HepG2 (cell line): ENCODE measurements at regions of chr12 and their contacts with region 1.

Region 1: GRCh38 chr12:98373025-98373554 is 142.3 kb upstream of the TMPO start:
- DNase-seq: peak; percentile 30
- ATAC-seq: peak; percentile 63
- H3K4me3 ChIP-seq: no peak overlapping the region
- H3K27ac ChIP-seq: no peak overlapping the region
- H3K4me1 ChIP-seq: no peaks in the 10 kb centered on the region
- H3K27me3 ChIP-seq: no peaks in the 10 kb centered on the region; a peak in 1 of 5 replicates
- CTCF ChIP-seq: peak; percentile 67
- EP300 ChIP-seq: no peak
- POLR2A ChIP-seq: no peak
- RAD21 ChIP-seq: no peak

Region 2: DNA sequence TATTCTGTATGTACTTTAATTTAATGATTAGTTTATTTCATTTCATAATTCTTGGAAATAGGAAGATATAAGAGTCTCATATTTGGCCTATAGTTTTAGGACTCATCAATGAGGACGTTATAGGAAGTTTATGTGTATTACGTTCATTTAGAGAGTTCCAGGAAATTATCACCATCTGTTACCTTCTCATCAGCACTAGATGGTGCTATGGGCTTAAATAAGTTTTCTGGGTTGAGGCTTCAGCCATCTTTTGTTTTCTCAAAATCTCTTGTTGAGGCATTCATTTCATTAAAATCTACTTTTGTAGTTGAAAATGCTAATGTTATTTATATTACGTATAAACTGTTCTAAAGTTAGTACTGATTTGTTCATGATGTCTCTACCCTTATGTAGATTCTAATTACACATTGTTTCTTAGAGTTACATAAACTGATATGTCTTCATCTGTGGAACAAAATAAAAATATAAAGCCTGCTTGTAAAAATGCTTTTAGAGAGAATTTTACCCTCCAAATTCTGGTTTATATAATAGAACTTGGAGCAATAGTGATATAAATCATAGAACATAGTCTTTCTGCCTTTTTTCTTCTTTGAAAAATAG is 1794.5 kb before region 1 on chr12:
- CTCF ChIA-PET with region 1: no interaction called
- POLR2A ChIA-PET with region 1: no interaction called
- in situ Hi-C with region 1: no loop called
- intact Hi-C with region 1: loop called (anchors 5 kb)
- DNase-seq: peak; percentile 48
- ATAC-seq: peak; percentile 71
- H3K4me3 ChIP-seq: no peak overlapping the region
- H3K27ac ChIP-seq: no peak overlapping the region
- H3K4me1 ChIP-seq: no peaks in the 10 kb centered on the region
- H3K27me3 ChIP-seq: no peaks in the 10 kb centered on the region
- CTCF ChIP-seq: peak; percentile 70
- EP300 ChIP-seq: no peak
- POLR2A ChIP-seq: no peak
- RAD21 ChIP-seq: no peak

Region 3: GRCh38 chr12:96985480-96986362 is 1387.4 kb before region 1 on chr12:
- CTCF ChIA-PET with region 1: no interaction called
- POLR2A ChIA-PET with region 1: no interaction called
- in situ Hi-C with region 1: loop called (anchors 25 kb)
- intact Hi-C with region 1: loop called (anchors 2 kb)
- DNase-seq: no peak
- ATAC-seq: peak; percentile 90
- H3K4me3 ChIP-seq: peak overlapping the region in 1 of 3 experiments; percentile 8; a peak in 1 of 6 replicates
- H3K27ac ChIP-seq: no peak overlapping the region
- H3K4me1 ChIP-seq: no peaks in the 10 kb centered on the region
- H3K27me3 ChIP-seq: peaks cover 1 to 10% of the 10 kb centered on the region in 2 experiments; a peak in 2 of 5 replicates
- CTCF ChIP-seq: peak; percentile 63
- EP300 ChIP-seq: no peak
- POLR2A ChIP-seq: no peak
- RAD21 ChIP-seq: 0 out of 2 replicates have a peak, but pooled peaks have one; percentile 18

Region 4: GRCh38 chr12:97716356-97716755 is 656.7 kb before region 1 on chr12:
- CTCF ChIA-PET with region 1: no interaction called
- POLR2A ChIA-PET with region 1: no interaction called
- in situ Hi-C with region 1: no loop called
- intact Hi-C with region 1: loop called (anchors 5 kb)
- DNase-seq: peak; percentile 9
- ATAC-seq: peak; percentile 67
- H3K4me3 ChIP-seq: no peak overlapping the region
- H3K27ac ChIP-seq: no peak overlapping the region
- H3K4me1 ChIP-seq: no peaks in the 10 kb centered on the region
- H3K27me3 ChIP-seq: no peaks in the 10 kb centered on the region
- CTCF ChIP-seq: peak; percentile 30; the same call in 1 of the 2 replicates
- EP300 ChIP-seq: no peak
- POLR2A ChIP-seq: no peak
- RAD21 ChIP-seq: no peak

Region 5: GRCh38 chr12:98002712-98003493 is 370.2 kb before region 1 on chr12:
- CTCF ChIA-PET with region 1: no interaction called
- POLR2A ChIA-PET with region 1: no interaction called
- in situ Hi-C with region 1: no loop called
- intact Hi-C with region 1: loop called (anchors 10 kb)
- DNase-seq: peak; percentile 36
- ATAC-seq: peak; percentile 64
- H3K4me3 ChIP-seq: no peak overlapping the region
- H3K27ac ChIP-seq: no peak overlapping the region
- H3K4me1 ChIP-seq: no peaks in the 10 kb centered on the region
- H3K27me3 ChIP-seq: no peaks in the 10 kb centered on the region
- CTCF ChIP-seq: peak; percentile 74
- EP300 ChIP-seq: no peak
- POLR2A ChIP-seq: no peak
- RAD21 ChIP-seq: no peak; the same call in 1 of the 2 replicates

Region 6: GRCh38 chr12:98227162-98227561 is 145.9 kb before region 1 on chr12:
- CTCF ChIA-PET with region 1: no interaction called
- POLR2A ChIA-PET with region 1: no interaction called
- in situ Hi-C with region 1: no loop called
- intact Hi-C with region 1: loop called (anchors 1 kb)
- DNase-seq: peak; percentile 6
- ATAC-seq: peak; percentile 60; the same call in 2 of the 3 replicates
- H3K4me3 ChIP-seq: no peak overlapping the region
- H3K27ac ChIP-seq: no peak overlapping the region
- H3K4me1 ChIP-seq: peaks cover 12% of the 10 kb centered on the region; the same call in 1 of the 2 replicates
- H3K27me3 ChIP-seq: no peaks in the 10 kb centered on the region
- CTCF ChIP-seq: peak; percentile 29
- EP300 ChIP-seq: no peak
- POLR2A ChIP-seq: no peak
- RAD21 ChIP-seq: no peak

Region 7: DNA sequence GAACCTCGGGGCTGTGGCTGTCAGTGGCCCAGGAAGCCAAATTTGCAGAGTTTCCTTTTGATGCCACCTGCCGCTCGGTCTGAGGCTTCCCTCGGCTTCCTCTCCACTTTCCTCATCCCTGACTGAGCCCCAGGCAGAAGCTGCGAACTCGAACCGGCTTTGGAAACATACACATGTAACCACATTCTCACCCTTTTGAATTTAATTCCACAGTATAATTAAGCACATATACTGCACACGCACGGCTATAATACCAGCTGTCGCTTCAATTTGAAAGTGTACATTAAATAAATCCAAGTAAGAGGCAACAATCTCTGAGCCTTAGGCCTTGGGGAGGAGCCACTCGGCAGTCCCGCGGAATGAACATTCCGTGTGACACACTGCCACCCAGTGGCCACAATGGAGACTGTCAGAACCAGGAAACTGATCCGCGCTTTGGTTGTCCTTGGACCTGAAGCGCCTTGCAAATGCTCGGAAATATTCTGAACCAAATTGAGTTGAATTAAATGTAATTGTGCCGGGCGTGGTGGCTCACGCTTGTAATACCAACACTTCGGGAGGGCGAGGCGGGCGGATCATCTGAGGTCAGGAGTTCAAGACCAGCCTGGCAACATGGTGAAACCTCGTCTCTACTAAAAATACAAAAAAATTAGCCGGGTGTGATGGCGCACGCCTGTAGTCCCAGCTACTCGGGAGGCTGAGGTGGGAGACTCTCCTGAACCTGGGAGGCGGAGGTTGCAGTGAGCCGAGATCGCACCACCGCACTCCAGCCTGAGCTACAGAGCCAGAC is 24.4 kb after region 1 on chr12:
- CTCF ChIA-PET with region 1: no interaction called
- POLR2A ChIA-PET with region 1: no interaction called
- in situ Hi-C with region 1: no loop called
- intact Hi-C with region 1: loop called (anchors 2 kb)
- DNase-seq: peak; percentile 68
- ATAC-seq: peak; percentile 94
- H3K4me3 ChIP-seq: peak overlapping the region; percentile 50 to 60 (median 54)
- H3K27ac ChIP-seq: no peak overlapping the region
- H3K4me1 ChIP-seq: peaks cover 31% of the 10 kb centered on the region
- H3K27me3 ChIP-seq: no peaks in the 10 kb centered on the region
- CTCF ChIP-seq: peak; percentile 93
- EP300 ChIP-seq: no peak
- POLR2A ChIP-seq: no peak
- RAD21 ChIP-seq: peak; percentile 78

Region 8: GRCh38 chr12:98470469-98471082 is 97.5 kb after region 1 on chr12:
- CTCF ChIA-PET with region 1: no interaction called
- POLR2A ChIA-PET with region 1: no interaction called
- in situ Hi-C with region 1: no loop called
- intact Hi-C with region 1: no loop called
- DNase-seq: no peak
- ATAC-seq: peak; percentile 61
- H3K4me3 ChIP-seq: no peak overlapping the region
- H3K27ac ChIP-seq: no peak overlapping the region
- H3K4me1 ChIP-seq: no peaks in the 10 kb centered on the region
- H3K27me3 ChIP-seq: no peaks in the 10 kb centered on the region; a peak in 2 of 5 replicates
- CTCF ChIP-seq: no peak
- EP300 ChIP-seq: no peak
- POLR2A ChIP-seq: no peak
- RAD21 ChIP-seq: no peak

Region 9: DNA sequence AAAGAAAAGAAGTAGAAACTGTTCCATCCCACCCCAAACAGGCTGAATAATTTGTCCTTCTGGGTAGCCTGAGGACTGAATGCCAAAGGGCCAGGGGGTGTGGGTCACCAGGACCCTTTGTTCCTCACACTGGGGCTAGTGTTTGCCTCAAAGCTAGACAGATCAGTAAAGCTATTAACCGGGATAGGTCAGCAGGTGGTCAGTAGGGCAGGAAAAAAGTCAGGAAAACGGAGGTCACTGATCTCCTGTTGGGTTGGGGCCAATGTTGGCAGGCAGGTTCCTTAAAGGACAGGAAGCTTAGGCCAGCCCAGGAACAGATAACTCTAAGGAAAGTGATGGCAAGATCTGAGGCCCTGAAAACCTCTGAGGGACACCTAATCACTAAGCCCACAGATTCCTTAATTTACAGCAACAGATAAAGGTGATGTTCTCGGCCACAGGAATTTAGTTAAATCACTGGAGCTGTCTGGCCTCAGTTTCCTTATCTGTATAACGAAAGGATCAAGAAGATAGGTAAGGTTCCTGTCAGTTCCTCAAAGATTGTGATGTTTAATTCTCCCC is 119.6 kb after region 1 on chr12:
- CTCF ChIA-PET with region 1: no interaction called
- POLR2A ChIA-PET with region 1: no interaction called
- in situ Hi-C with region 1: no loop called
- intact Hi-C with region 1: no loop called
- DNase-seq: no peak
- ATAC-seq: peak; percentile 44; the same call in 2 of the 3 replicates
- H3K4me3 ChIP-seq: no peak overlapping the region
- H3K27ac ChIP-seq: peak overlapping the region; percentile 28
- H3K4me1 ChIP-seq: peaks cover 51% of the 10 kb centered on the region
- H3K27me3 ChIP-seq: no peaks in the 10 kb centered on the region
- CTCF ChIP-seq: no peak
- EP300 ChIP-seq: no peak
- POLR2A ChIP-seq: no peak
- RAD21 ChIP-seq: no peak